Right ventricle myocardium inferior (tissue), 1 donor: ENCODE measurements at regions of chr6 and their contacts with region 1.

Region 1: DNA sequence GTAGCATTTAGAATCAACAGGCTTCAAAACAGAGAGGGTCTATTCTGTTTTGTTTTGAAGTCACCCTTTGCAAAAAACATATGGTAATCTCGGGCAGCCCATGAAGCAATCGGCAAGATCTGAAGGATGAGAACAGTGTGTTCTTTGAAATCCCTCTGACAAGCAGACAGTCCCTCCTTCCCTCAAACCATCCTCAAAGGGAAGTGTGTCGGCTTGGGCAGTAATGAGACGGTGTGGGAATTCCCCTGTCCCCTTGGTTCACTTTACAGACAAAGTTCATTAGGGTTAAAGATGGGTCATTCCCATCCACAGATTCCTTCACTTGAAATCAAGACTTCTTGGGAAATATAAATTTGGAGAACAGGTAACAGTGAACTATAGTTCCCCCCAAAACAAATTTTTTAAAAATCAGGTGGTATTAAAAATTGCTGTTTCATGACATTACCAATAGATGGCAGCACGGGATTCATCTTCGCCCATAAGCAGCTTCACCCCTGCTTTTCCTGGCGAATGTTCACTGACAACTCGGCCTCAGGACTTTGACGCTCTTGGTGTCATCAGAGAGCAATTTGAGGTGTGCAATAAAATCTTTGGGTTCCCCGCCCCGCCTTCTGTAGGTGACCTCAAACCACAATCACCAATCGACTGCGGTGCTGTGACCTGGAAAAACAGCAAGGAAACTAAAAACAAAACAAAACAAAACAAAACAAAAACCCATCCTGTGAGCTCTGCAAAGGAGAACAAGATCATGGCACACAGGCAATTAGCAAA is 159.3 kb upstream of the TNFAIP3 start:
- DNase-seq: no peak
- ATAC-seq: peak; percentile 66

Region 2: GRCh38 chr6:137661601-137662000 is 46.2 kb before region 1 on chr6:
- intact Hi-C with region 1: loop called (anchors 2 kb)
- DNase-seq: no peak
- ATAC-seq: no peak

Region 3: DNA sequence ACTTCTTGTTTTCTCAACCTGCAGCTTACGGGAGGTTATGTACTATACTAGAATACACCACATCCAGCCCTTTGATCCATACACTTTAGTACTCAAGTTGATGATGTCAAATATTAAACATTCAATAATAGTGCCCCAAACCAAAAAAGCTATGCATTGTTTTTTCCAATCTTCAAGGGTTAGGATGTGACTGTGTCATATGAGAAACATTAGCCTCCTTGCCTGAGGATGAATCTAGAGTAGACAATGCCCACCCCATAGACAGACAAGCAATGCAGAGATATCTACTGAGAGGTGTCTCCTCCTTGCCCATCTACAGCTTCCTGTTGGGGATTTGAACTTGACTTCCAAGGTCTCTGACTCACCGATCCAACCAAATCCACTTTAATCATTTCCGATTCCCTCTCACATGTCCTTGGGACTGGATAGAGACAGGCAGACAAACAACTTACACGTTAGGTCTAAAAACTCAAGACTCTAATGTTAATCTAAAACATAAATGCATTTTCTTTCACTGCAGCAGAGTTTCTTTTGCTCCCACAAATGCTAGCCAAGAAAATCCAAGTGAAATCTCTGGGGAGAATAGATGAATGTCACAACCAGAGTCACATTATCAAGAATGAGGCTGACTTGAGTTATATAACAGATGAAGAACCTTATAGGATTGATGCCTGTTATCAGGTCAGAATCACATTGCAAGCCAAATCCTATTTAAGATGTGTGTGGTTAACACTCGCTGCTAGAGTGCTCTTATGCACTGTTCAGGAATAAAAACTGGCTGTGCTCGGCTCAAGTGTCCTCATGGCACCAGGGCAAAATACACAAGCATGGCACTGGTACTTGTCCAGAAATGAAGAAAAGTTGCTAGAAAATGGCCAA is 83.7 kb after region 1 on chr6:
- intact Hi-C with region 1: loop called (anchors 5 kb)
- DNase-seq: no peak
- ATAC-seq: no peak

Region 4: GRCh38 chr6:137866914-137867684 is 159.3 kb after region 1 on chr6 and contains the start of gene TNFAIP3:
- intact Hi-C with region 1: loop called (anchors 1 kb)
- DNase-seq: peak; percentile 95
- ATAC-seq: peak; percentile 91
- total RNA-seq, gene TNFAIP3: 6.8 TPM

Region 5: GRCh38 chr6:137944793-137945498 is 237.2 kb after region 1 on chr6:
- intact Hi-C with region 1: loop called (anchors 1 kb)
- DNase-seq: no peak
- ATAC-seq: peak; percentile 77

Region 6: GRCh38 chr6:138001750-138002349 is 294.1 kb after region 1 on chr6:
- intact Hi-C with region 1: loop called (anchors 5 kb)
- DNase-seq: no peak
- ATAC-seq: peak; percentile 42

Region 7: GRCh38 chr6:138109042-138109997 is 401.5 kb after region 1 on chr6:
- intact Hi-C with region 1: loop called (anchors 5 kb)
- DNase-seq: no peak
- ATAC-seq: no peak